ENCODE measurements at regions of chr9 and their contacts with region 1.

Region 1: DNA sequence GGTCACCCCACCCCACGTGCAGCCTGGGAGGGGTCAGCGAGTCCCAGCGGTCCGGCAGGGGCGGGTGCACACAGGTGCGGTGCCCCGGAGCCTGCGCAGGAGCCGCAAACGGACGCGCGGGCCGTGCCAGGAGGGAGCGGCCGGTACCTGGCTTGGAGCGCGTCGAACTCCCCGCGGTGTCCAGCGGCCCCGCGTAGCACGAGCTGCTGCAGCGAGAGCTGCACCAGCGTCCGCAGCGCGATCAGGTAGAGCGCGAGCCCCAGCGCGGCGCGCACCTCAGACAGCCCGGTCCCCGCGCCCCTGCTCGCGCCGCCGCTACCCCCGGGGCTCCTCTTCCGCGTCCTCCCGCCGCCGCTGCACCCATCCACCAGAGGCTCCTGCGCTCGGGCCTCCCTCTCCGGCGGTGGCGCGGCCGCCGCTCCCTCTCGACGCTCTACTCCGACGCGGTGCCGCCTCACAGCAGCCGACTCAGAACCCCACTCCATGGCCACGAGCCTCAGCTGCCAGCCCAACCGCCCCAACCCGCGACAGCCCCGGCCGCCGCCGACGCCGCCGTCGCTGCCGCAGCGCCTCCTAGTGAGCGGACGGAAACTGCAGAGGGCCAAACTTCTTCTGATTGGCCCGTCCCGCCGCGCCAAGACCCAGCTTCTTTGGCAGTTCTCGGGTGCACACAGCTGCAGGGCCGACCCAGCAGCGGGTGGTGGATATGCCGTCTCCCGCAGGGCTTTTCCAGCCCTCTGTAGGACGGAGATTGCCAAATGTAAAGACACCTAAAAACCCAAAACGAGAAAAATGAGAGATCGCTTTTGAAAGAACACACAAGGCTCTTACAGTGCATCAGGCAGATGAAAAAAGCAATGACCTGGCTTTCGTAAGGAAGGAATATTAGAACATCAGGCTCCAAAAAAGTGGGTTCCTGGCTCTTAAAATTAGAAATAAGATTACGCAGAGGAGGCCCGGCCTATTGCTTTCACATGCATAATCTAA is at the start of gene ERMP1:
- DNase-seq: peak; percentile 85 to 94 (median 90)
- H3K4me3 ChIP-seq: peak within 1 kb of the TSS; percentile 52 to 99 (median 91)
- H3K27ac ChIP-seq: peak within 1 kb of the TSS; percentile 38 to 97 (median 90)
- H3K27me3 ChIP-seq: no peaks in the 10 kb centered on the region
- CTCF ChIP-seq: peak; percentile 62 to 96 (median 88)
- total RNA-seq, gene ERMP1: 24.1 to 60.7 (median 35.2) TPM

Region 2: GRCh38 chr9:5628530-5629311 is 204.1 kb before region 1 on chr9 and contains the start of gene RIC1:
- intact Hi-C with region 1: loop called (anchors 2 kb)
- DNase-seq: peak; percentile 81 to 93 (median 90)
- H3K4me3 ChIP-seq: peak within 1 kb of the TSS; percentile 58 to 100 (median 94)
- H3K27ac ChIP-seq: peak within 1 kb of the TSS; percentile 75 to 98 (median 93)
- H3K27me3 ChIP-seq: no peaks in the 10 kb centered on the region
- CTCF ChIP-seq: peak in 21 of 56 donors; percentile 5 to 45 (median 25)
- total RNA-seq, gene RIC1: 14.5 to 24.0 (median 19.2) TPM

Region 3: GRCh38 chr9:5799314-5799713 is 33.5 kb before region 1 on chr9:
- intact Hi-C with region 1: loop called (anchors 2 kb)
- DNase-seq: peak in 1 of 10 donors; percentile 57
- H3K4me3 ChIP-seq: peak overlapping the region in 52 of 59 donors; percentile 6 to 63 (median 40)
- H3K27ac ChIP-seq: peak overlapping the region in 28 of 59 donors; percentile 2 to 77 (median 45)
- H3K27me3 ChIP-seq: no peaks in the 10 kb centered on the region
- CTCF ChIP-seq: peak; percentile 48 to 91 (median 78)

Region 4: GRCh38 chr9:6008169-6008979 is 175.5 kb after region 1 on chr9:
- intact Hi-C with region 1: loop called (anchors 5 kb)
- DNase-seq: peak; percentile 82 to 97 (median 94)
- H3K4me3 ChIP-seq: peak overlapping the region; percentile 65 to 95 (median 85)
- H3K27ac ChIP-seq: peak overlapping the region; percentile 85 to 99 (median 97)
- H3K27me3 ChIP-seq: no peaks in the 10 kb centered on the region
- CTCF ChIP-seq: peak in 5 of 56 donors; percentile 2 to 34 (median 11)

Measured in dorsolateral prefrontal cortex (tissue), 120 donors.